A673 (cell line): ENCODE measurements at regions of chr2 and their contacts with region 1.

Region 1: DNA sequence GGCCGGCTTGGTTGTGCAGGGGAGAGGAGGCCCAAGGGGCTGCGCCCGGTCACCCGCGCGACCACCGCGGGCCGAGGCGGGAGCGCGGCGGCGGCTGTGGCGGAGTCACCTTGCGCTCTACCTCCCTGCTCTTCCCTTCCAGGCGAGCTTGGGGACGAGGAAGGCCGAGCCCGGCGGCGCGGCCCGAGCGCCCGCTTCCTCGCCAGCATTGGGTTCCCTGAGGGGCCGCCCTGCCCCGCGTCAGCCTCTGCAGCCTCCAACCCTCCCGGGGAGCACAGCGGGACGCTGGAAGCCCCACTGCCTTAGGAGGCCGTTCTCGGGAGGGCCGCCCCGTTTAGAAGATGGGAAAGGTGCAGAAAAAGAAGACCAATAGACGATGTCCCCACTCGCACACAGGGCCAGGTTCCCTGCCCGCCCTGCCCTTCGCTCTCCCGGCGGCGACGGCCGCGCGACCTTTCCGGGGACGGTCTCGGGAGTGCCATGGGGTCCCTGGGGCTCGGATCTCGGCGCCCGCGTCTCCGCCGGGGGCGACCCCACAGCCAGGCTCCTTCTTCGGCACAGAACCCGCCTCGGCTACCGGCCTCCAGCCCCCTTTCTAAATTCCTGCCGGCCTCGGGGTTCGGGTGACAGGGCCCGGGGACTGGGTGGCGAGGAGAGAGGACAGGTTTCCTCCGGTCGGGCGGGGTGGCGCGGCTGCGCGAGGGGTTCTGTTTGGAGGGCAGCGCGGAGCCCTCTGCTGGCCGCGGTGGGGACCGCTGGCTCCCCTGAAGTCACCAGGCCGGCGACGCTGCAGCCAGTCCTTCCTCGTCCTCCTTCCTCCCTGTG is 85.5 kb downstream of the HS6ST1 start:
- DNase-seq: peak; percentile 85
- H3K4me3 ChIP-seq: peak overlapping the region; percentile 85
- H3K27ac ChIP-seq: peak overlapping the region; percentile 52
- H3K4me1 ChIP-seq: no peaks in the 10 kb centered on the region
- H3K27me3 ChIP-seq: no peaks in the 10 kb centered on the region
- CTCF ChIP-seq: peak; percentile 93

Region 2: DNA sequence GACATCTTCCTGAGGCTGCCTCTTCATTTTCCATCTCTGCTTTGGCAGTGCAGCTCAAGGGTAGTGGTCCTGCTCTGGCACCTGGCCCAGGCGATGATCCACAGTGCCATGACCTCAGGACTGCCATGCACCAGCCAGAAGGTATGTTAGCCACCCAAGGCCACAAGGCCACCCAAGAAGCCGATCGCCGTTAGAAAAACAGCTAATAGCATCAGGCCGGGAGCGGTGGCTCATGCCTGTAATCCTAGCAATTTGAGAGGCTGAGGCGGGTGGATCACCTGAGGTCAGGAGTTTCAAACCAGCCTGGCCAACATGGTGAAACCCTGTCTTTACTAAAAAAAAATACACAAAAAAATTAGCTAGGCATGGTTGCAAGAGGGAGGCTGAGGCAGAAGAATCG is 170.6 kb before region 1 on chr2:
- CTCF ChIA-PET with region 1: interaction called, 3 read pairs
- POLR2A ChIA-PET with region 1: no interaction called
- intact Hi-C with region 1: loop called (anchors 1 kb)
- DNase-seq: no peak
- H3K4me3 ChIP-seq: no peak overlapping the region
- H3K27ac ChIP-seq: no peak overlapping the region
- H3K4me1 ChIP-seq: no peaks in the 10 kb centered on the region
- H3K27me3 ChIP-seq: no peaks in the 10 kb centered on the region
- CTCF ChIP-seq: no peak

Region 3: GRCh38 chr2:128178650-128179460 is 54.3 kb before region 1 on chr2:
- CTCF ChIA-PET with region 1: no interaction called
- POLR2A ChIA-PET with region 1: no interaction called
- intact Hi-C with region 1: loop called (anchors 5 kb)
- DNase-seq: peak; percentile 65
- H3K4me3 ChIP-seq: no peak overlapping the region
- H3K27ac ChIP-seq: no peak overlapping the region
- H3K4me1 ChIP-seq: no peaks in the 10 kb centered on the region
- H3K27me3 ChIP-seq: no peaks in the 10 kb centered on the region
- CTCF ChIP-seq: peak; percentile 91

Region 4: DNA sequence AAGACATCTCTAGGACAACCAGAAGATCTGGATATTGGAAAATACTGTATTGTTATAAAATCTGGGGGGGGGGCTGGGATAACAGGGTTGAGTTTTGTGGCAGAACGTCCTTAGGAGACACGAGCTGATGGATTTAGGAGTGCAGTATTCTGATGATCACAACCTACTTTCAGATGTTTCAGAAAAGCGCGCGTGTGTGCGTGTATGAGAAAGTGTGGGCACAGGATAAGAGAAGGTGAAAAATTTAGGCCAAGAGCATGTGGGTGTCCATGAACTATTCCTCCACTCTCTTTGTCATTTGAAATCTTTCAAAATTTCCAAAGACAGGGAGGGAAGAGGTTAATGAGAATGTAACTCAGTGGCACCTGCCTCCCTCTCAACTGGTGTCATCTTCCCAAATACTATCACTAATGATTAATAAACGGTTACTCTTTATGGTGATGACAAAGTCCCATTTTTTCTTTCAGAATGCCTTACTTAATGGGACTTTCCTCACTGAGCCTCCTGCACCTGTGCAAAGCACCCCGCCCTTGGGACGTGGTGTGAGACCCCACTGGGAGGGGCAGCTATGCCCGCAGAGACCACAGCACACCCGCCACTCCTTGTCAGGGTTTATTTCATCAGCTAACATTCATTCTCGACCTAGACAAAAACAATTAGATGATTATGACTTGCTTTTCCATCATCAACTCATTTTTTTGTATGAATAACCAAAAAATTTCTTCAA is 31.9 kb after region 1 on chr2:
- CTCF ChIA-PET with region 1: no interaction called
- POLR2A ChIA-PET with region 1: no interaction called
- intact Hi-C with region 1: no loop called
- DNase-seq: no peak
- H3K4me3 ChIP-seq: no peak overlapping the region
- H3K27ac ChIP-seq: no peak overlapping the region
- H3K4me1 ChIP-seq: no peaks in the 10 kb centered on the region
- H3K27me3 ChIP-seq: no peaks in the 10 kb centered on the region
- CTCF ChIP-seq: no peak

Region 5: DNA sequence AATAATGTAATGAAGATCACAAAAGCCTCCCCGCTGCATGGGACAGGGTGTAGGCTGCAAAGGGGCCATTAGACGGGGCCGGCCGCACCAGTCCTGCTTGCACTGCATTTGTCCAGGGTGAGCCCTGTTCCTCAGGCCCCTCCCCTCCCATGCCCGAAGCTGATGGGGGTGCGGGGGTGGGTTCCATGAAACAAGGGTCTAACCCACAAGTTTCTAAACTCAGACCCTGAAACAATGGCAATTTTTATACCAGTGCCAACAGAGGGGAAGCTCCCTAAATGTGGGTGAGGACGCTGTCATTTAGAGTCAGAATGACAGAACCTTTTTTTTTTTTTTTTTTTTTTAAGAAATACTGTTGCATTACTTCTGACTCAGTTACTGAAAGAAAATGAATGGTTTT is 45.8 kb after region 1 on chr2:
- CTCF ChIA-PET with region 1: no interaction called
- POLR2A ChIA-PET with region 1: interaction called, 23 read pairs
- intact Hi-C with region 1: no loop called
- DNase-seq: no peak
- H3K4me3 ChIP-seq: no peak overlapping the region
- H3K27ac ChIP-seq: no peak overlapping the region
- H3K4me1 ChIP-seq: no peaks in the 10 kb centered on the region
- H3K27me3 ChIP-seq: no peaks in the 10 kb centered on the region
- CTCF ChIP-seq: no peak

Region 6: DNA sequence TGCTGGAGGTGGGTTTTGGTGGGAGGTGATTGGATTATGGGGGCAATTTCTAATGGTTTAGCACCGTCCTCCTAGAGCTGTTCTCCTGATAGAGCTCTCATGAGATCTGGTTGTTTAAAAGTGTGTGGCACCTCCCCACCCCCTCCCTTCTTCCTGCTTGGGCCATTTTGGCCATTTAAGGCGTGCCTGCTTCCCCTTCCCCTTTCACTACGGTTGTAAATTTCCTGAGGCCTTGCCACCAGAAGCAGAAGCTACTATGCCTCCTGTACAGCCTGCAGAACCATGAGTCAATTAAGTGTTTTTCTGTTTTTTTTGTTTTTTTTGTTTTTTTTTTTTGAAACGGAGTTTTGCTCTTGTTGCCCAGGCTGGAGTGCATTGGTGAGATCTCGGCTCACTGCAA is 421.2 kb after region 1 on chr2:
- CTCF ChIA-PET with region 1: no interaction called
- POLR2A ChIA-PET with region 1: no interaction called
- intact Hi-C with region 1: no loop called
- DNase-seq: no peak
- H3K4me3 ChIP-seq: no peak overlapping the region
- H3K27ac ChIP-seq: no peak overlapping the region
- H3K4me1 ChIP-seq: no peaks in the 10 kb centered on the region
- H3K27me3 ChIP-seq: no peaks in the 10 kb centered on the region
- CTCF ChIP-seq: no peak